Transverse colon (tissue), 4 donors: ENCODE measurements at regions of chr3 and their contacts with region 1.

Region 1: DNA sequence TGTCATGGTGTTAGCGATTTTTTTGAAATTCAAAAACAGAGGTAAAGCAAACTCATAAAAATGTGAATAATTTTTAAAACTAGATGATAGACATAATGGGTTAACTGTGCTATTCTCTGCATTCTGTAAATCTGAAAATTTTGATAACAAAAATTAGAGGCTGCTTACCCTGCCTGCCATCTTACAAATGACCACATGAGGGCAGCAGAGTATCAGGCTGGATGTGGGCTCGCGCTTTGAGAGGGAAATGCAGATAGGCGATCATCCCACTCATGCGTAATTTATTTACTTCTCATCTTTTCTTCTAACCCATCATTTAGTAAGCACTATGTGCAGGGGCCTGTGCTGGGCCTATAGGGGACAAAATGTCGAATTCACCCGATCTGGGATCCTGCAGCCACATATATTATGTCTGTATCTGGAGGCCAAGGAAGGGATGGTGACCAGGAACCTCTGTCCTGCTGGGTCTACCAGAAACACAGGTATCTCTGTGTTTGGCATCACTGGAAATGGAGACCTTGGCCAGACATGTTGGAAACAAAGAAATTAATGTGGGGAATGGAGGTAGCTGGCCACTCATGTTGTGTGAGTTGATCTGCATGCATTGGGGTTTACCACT is 7.8 kb upstream of the RAD18 start:
- DNase-seq: peak; percentile 73
- H3K4me3 ChIP-seq: no peak overlapping the region
- H3K27ac ChIP-seq: no peak overlapping the region
- H3K4me1 ChIP-seq: peaks cover 0 to 13% (median 3%) of the 10 kb centered on the region in 4 donors
- H3K27me3 ChIP-seq: no peaks in the 10 kb centered on the region
- CTCF ChIP-seq: peak; percentile 96 to 99 (median 99)
- EP300 ChIP-seq: no peak
- POLR2A ChIP-seq: no peak

Region 2: DNA sequence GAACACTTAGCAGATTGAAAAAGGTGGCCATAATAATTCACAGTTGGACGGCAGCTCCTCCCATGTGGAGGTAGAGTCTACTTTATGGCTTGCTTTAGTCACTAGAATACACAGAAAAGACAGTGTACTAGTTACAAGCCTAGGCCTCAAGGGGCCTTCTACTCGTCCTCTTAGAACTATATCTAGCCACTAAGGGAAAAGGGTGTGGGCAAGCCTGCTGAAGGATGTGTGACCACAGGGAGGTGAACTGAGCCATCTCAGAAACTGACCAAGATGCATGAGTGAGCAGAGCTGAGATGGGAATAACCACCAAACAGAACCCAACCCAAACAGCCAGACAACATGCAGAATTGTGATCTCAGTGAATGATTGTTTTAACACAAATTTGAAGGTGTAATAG is 805.1 kb before region 1 on chr3:
- in situ Hi-C with region 1: no loop called
- intact Hi-C with region 1: no loop called
- DNase-seq: no peak
- H3K4me3 ChIP-seq: no peak overlapping the region
- H3K27ac ChIP-seq: no peak overlapping the region
- H3K4me1 ChIP-seq: no peaks in the 10 kb centered on the region
- H3K27me3 ChIP-seq: no peaks in the 10 kb centered on the region
- CTCF ChIP-seq: no peak
- EP300 ChIP-seq: no peak
- POLR2A ChIP-seq: no peak

Region 3: DNA sequence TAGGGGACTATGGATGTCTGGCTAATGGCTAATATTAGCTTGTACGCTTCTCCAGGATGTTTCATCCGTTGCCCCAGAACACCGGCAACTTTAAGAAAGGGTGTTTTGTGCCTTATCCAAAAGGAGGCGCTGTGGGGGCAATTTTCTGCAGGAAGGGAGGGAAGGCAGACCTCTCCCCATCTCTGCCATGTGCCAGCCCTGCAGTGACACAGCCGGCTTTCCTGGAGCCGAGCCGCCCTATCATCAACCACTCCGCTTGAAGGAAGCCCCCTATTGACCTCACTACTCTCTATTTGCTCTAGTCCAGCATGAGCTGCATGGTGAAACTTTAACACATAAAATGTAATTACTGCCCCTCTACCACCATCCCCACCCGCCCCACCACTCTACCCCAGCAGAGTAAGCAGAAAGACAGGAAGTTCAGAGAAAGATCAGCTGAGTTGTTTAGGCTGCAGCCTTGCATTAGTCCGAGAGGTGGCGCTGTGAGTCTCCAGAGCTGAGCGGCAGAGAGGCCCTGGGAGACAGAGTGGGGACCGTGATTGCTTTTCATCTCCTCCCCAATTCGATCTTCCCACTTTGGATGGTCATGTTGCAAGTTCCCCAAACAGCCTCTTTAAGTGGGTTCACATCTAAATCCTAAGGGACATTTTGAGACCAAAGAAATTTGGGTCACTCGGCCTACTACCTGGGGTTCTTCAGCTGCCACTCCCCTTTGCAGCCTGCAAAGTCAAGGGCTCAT is 16.7 kb after region 1 on chr3:
- in situ Hi-C with region 1: no loop called
- intact Hi-C with region 1: loop called (anchors 1 kb)
- DNase-seq: peak; percentile 62
- H3K4me3 ChIP-seq: no peak overlapping the region
- H3K27ac ChIP-seq: no peak overlapping the region
- H3K4me1 ChIP-seq: peaks cover 0 to 9% (median 4%) of the 10 kb centered on the region in 4 donors
- H3K27me3 ChIP-seq: no peaks in the 10 kb centered on the region
- CTCF ChIP-seq: peak; percentile 63 to 76 (median 74)
- EP300 ChIP-seq: no peak
- POLR2A ChIP-seq: no peak

Region 4: GRCh38 chr3:9067352-9067975 is 96.4 kb after region 1 on chr3:
- in situ Hi-C with region 1: loop called in 2 of 4 experiments (anchors 5 to 10 kb)
- intact Hi-C with region 1: no loop called
- DNase-seq: peak; percentile 41
- H3K4me3 ChIP-seq: no peak overlapping the region
- H3K27ac ChIP-seq: no peak overlapping the region
- H3K4me1 ChIP-seq: no peaks in the 10 kb centered on the region
- H3K27me3 ChIP-seq: no peaks in the 10 kb centered on the region
- CTCF ChIP-seq: peak; percentile 86 to 93 (median 90)
- EP300 ChIP-seq: no peak
- POLR2A ChIP-seq: no peak

Region 5: DNA sequence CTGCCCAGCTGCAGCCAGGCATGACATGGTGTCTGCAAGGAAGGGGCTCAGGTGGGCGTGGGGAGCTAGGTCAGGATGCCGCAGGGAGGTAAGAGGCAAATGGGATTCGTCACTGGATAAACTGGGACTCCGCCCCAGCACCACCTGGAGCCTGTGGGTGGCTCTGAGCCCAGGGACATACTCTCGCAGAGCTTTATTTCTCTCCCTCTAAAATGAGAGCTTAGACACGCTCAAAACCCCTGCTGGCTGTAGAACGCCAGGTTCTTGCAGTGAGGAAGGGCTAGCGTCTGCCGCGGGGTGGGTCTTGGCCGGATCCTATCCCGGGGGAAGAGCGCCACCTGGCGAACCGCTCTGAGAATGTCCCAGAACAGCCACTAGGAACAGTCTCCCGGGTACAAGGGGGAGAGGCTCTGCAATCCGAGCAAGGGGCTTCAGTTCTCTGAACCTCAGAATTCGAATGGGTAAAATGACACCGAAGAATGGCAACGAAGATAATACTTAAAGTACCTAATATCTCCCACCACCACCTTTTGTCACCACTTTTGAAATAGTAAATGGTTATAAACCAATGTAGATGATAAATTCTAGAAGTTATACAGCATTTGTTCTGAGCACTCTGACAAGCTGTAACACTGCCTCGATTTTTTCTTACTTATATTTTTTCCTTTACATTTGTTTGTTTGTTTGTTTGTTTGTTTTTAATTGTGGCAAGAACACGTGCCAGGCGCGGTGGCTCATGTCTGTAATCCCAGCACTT is 331.5 kb after region 1 on chr3:
- in situ Hi-C with region 1: loop called (anchors 5 to 10 kb)
- intact Hi-C with region 1: loop called (anchors 1 kb)
- DNase-seq: peak; percentile 80
- H3K4me3 ChIP-seq: peak overlapping the region in 3 of 4 donors; percentile 12 to 32 (median 18)
- H3K27ac ChIP-seq: no peak overlapping the region
- H3K4me1 ChIP-seq: peaks cover 0 to 6% (median 2%) of the 10 kb centered on the region in 4 donors
- H3K27me3 ChIP-seq: no peaks in the 10 kb centered on the region
- CTCF ChIP-seq: peak; percentile 87 to 96 (median 89)
- EP300 ChIP-seq: no peak
- POLR2A ChIP-seq: no peak